BJ (cell line): ENCODE measurements at regions of chr7 and their contacts with region 1.

Region 1: DNA sequence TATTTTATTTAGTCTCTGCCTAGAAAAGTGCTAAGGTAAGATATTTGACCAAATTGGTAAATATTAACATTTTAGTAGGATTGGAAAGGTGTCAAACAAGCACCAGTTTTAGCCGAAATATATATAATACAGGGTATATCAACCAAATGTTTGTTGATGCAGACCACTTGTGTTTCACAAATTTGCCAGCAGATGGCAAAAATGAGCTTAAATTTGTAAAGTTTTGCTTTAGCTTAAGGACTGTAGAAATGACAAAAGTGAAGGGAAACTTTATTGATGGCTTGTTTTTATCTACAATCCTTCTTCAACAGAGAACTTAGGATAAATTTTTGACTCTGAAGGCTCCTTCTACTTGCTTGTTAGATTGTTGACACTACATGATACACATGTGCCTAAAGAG is 4.8 kb upstream of the POLR1F start:
- DNase-seq: no peak
- H3K4me3 ChIP-seq: no peak overlapping the region
- H3K27me3 ChIP-seq: no peaks in the 10 kb centered on the region; the same call in 1 of the 2 replicates
- CTCF ChIP-seq: peak; percentile 61

Region 2: DNA sequence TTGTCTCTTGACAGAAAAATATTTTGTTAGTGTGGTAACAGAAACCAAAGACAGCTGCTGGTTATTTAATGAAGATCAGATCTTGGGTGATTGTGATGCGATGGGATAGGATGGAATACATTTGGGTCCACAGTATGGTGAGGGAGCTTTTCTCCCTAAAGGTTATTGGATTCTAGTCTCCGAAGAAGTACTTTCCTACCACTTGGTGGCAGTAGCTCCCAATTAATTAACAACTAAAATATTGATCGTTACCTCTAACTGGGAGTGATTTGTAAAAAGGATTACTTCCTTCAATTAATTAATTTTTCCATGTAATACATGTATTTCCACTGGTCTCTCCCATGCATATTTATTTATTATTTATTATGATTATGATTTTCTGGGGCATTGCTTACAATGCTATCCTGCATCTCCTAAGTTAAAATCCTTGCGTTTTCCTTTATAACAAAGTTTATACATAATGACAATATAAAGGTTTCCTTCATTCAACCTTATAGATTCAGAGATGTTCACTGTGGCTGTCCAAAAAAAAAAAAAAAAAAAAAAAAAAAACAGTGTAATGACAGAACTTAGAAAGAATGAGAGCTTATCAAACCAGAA is 34.2 kb after region 1 on chr7:
- CTCF ChIA-PET with region 1: interaction called, 10 read pairs
- POLR2A ChIA-PET with region 1: no interaction called
- DNase-seq: no peak
- H3K4me3 ChIP-seq: no peak overlapping the region
- H3K27me3 ChIP-seq: no peaks in the 10 kb centered on the region
- CTCF ChIP-seq: peak; percentile 53